Activated CD4-positive, alpha-beta memory T cell treated with anti-CD3 and anti-CD28 coated beads for 36 hours (primary cell): ENCODE measurements at regions of chr1 and their contacts with region 1.

Region 1: GRCh38 chr1:110312188-110313121 is 26.7 kb upstream of the RBM15 start:
- DNase-seq: peak; percentile 81
- H3K4me3 Mint-ChIP-seq: no peak overlapping the region
- H3K27ac Mint-ChIP-seq: no peak overlapping the region
- H3K4me1 Mint-ChIP-seq: no peaks in the 10 kb centered on the region
- H3K27me3 Mint-ChIP-seq: no peaks in the 10 kb centered on the region

Region 2: DNA sequence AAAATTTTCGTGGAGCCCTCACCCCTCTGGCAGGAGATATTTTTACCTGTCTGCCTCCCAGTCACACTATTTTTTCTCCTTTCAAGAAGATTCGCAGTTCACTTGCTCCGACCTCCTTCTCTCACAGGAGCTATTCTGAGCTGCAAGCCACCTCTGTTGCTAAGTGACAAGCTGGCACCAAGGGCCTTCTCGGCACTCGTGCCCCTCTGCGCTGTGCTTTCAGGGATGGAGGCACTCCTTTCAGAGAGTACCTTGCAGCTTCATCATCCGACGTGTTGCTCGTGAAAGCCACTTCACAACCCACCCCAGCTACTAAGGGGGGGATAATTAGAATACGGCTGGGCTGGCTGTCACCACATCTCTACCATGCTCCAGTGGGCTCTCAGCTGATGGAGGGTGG is 150.6 kb before region 1 on chr1:
- CTCF ChIA-PET with region 1: no interaction called
- POLR2A ChIA-PET with region 1: no interaction called
- intact Hi-C with region 1: no loop called
- DNase-seq: no peak
- H3K4me3 Mint-ChIP-seq: no peak overlapping the region
- H3K27ac Mint-ChIP-seq: no peak overlapping the region
- H3K4me1 Mint-ChIP-seq: no peaks in the 10 kb centered on the region
- H3K27me3 Mint-ChIP-seq: peaks cover 17% of the 10 kb centered on the region

Region 3: GRCh38 chr1:110196917-110197765 is 115.3 kb before region 1 on chr1:
- CTCF ChIA-PET with region 1: interaction called, 920 read pairs
- POLR2A ChIA-PET with region 1: no interaction called
- intact Hi-C with region 1: no loop called
- DNase-seq: peak; percentile 63
- H3K4me3 Mint-ChIP-seq: no peak overlapping the region
- H3K27ac Mint-ChIP-seq: no peak overlapping the region
- H3K4me1 Mint-ChIP-seq: no peaks in the 10 kb centered on the region
- H3K27me3 Mint-ChIP-seq: no peaks in the 10 kb centered on the region

Region 4: GRCh38 chr1:110203021-110203661 is 109.3 kb before region 1 on chr1:
- CTCF ChIA-PET with region 1: interaction called, 920 read pairs
- POLR2A ChIA-PET with region 1: interaction called, 9 read pairs
- intact Hi-C with region 1: loop called (anchors 1 kb)
- DNase-seq: peak; percentile 73
- H3K4me3 Mint-ChIP-seq: no peak overlapping the region
- H3K27ac Mint-ChIP-seq: peak overlapping the region; percentile 83
- H3K4me1 Mint-ChIP-seq: peaks cover 15% of the 10 kb centered on the region
- H3K27me3 Mint-ChIP-seq: no peaks in the 10 kb centered on the region

Region 5: DNA sequence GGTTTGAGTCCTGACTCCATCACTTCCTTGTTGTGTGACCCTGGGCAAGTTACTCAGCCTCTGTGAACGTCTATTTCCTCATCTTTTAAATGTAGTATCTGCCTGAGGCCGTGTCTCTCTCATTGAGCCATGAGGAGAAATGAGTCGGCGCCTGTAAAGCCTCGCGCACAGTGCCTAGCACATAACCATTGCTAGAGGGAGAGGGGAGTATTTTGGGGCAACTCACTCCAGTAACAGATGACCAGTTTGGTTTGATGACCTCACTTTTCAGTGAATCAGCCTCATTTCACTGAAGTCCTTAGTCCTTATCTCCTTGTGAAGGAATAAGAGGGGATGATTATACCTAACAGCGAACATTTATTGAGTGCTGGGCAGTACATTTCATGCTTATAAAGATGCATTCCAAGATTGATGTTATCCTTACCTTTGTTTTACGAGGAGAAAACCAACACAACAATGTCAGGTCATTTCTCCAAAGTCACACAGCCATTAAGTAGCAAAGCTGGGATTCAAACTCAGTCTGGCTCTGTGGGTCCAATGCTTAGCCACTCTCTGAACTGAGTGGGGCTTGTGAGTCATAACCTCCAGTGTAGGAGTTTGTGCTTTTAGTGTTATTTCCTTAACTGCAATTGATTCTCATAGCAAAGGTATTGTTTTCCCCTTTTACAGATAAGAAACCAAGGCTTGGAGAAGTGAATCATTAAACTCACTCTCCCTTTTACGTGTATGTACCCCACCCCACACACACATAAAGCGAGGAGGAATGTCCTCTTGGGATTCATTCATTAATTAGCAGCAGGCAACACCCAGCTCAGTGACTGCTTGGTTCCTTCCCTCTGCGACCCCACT is 76.4 kb before region 1 on chr1:
- CTCF ChIA-PET with region 1: interaction called, 17 read pairs
- POLR2A ChIA-PET with region 1: no interaction called
- intact Hi-C with region 1: no loop called
- DNase-seq: peak; percentile 86
- H3K4me3 Mint-ChIP-seq: peak overlapping the region; percentile 22
- H3K27ac Mint-ChIP-seq: peak overlapping the region; percentile 97
- H3K4me1 Mint-ChIP-seq: peaks cover 56% of the 10 kb centered on the region
- H3K27me3 Mint-ChIP-seq: no peaks in the 10 kb centered on the region

Region 6: DNA sequence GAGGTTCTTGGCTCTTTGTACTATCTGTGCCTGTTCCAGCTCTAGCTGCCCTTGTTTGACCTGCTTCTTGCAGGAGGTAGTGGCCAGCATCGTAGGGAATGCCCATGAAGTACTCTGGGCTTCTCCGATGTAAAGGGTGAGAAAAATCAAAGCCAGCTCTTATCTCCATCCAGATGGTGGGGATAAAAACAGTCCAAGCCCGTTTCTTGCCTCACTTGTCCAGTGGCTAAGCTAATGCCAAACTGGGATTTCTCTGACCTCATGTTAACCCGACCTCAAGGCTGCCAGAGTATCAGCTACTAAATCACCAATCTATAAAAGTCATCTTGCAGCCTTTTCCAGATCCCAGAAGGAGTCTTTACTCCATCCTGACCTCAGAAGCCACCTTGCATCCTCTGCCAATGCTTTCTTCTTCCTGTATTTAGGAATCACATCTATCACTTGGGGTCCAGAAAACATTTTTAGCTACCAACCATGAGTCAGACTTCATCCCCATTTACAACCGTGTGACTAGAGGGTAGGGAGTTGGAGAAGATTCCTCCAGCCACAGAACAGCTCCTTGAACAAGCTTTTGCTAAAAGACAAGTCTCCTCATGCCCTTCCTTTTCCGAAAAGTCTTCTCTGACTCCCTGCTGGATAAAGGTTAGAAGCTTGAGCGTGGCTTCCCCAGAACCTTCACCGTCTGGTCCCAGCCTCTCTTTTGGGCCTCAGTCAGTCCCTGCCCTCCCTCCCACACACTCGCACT is 66.4 kb before region 1 on chr1:
- CTCF ChIA-PET with region 1: interaction called, 15 read pairs
- POLR2A ChIA-PET with region 1: no interaction called
- intact Hi-C with region 1: no loop called
- DNase-seq: no peak
- H3K4me3 Mint-ChIP-seq: no peak overlapping the region
- H3K27ac Mint-ChIP-seq: no peak overlapping the region
- H3K4me1 Mint-ChIP-seq: peaks cover 8% of the 10 kb centered on the region
- H3K27me3 Mint-ChIP-seq: no peaks in the 10 kb centered on the region

Region 7: GRCh38 chr1:110262846-110263631 is 49.4 kb before region 1 on chr1:
- CTCF ChIA-PET with region 1: no interaction called
- POLR2A ChIA-PET with region 1: no interaction called
- intact Hi-C with region 1: loop called (anchors 5 kb)
- DNase-seq: peak; percentile 32
- H3K4me3 Mint-ChIP-seq: no peak overlapping the region
- H3K27ac Mint-ChIP-seq: no peak overlapping the region
- H3K4me1 Mint-ChIP-seq: no peaks in the 10 kb centered on the region
- H3K27me3 Mint-ChIP-seq: peaks cover 3% of the 10 kb centered on the region

Region 8: DNA sequence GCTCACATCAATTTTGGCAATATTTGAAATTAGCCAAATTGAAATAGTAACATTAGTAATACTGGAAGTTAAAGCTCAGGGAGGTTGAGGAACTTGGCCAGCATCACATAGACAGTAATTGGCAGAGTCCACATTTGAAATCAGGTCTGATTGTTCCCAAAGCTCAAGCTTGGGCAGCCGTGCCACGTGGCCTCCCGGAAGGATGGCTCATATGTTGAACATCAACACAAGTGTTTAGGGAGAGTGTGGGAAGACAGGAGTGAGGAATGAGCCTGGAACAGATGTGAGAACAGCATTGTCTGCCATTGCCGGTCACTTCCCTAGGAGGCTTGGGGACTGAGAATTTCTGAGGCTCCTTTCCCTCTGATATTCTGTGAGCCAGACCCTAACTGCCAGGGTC is 13.5 kb before region 1 on chr1:
- CTCF ChIA-PET with region 1: interaction called, 16 read pairs
- POLR2A ChIA-PET with region 1: no interaction called
- intact Hi-C with region 1: no loop called
- DNase-seq: no peak
- H3K4me3 Mint-ChIP-seq: no peak overlapping the region
- H3K27ac Mint-ChIP-seq: no peak overlapping the region
- H3K4me1 Mint-ChIP-seq: no peaks in the 10 kb centered on the region
- H3K27me3 Mint-ChIP-seq: no peaks in the 10 kb centered on the region

Region 9: DNA sequence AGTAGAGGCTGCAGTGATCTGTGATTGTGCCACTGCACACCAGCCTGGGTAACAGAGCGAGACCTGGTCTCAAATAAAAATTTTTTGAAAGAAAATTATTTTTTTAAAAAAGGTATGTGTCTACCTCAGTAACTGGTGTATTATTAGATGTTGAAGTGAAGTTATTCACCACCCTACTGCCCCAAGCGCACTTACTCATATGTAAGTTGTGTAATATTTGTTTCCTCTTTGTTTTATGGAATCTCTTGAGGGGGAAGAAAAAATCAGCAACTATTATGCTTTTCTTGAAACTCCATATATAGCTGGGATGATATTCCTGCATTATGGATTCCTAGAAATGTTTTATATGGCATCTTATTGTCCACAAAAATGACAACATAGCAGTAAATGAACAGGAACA is 48.0 kb after region 1 on chr1:
- CTCF ChIA-PET with region 1: no interaction called
- POLR2A ChIA-PET with region 1: no interaction called
- intact Hi-C with region 1: no loop called
- DNase-seq: no peak
- H3K4me3 Mint-ChIP-seq: no peak overlapping the region
- H3K27ac Mint-ChIP-seq: no peak overlapping the region
- H3K4me1 Mint-ChIP-seq: peaks cover 22% of the 10 kb centered on the region
- H3K27me3 Mint-ChIP-seq: no peaks in the 10 kb centered on the region